Stomach (tissue), 19 donors: ENCODE measurements at regions of chr1 and their contacts with region 1.

Region 1: DNA sequence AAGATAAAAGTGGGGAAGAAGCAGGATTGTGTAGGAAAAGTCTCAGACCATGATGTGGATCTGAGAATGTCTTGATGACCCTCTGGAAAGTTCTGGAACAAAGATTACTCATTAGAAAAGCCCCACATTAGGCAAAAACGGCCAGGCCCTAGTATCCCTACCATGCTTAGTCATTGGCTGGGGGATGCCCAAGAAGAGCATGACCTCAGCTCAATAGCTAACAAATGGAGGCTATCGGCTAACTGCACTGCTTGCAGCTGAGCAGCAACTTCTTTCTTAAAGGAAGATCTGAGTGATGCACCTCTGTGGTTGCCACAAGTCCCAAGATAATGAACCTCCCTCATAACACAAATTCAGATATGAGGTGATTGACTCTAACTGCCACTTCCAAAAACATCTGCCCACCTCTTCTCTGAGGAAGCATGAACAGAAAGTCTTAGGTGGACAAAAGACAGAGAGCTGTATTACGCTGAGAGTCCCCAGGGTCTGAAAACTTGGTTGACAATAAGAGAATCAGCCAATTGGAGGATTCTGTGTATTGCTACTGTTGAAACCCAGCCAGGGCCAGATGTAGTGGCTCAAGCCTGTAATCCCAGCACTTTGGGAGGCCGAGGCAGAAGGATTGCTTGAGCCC is 64.6 kb upstream of the AK4 start:
- DNase-seq: no peak
- H3K4me3 ChIP-seq: no peak overlapping the region
- H3K27ac ChIP-seq: no peak overlapping the region
- H3K4me1 ChIP-seq: no peaks in the 10 kb centered on the region
- H3K27me3 ChIP-seq: no peaks in the 10 kb centered on the region
- CTCF ChIP-seq: no peak
- EP300 ChIP-seq: no peak
- POLR2A ChIP-seq: no peak

Region 2: GRCh38 chr1:65174585-65174984 is 91.2 kb after region 1 on chr1:
- intact Hi-C with region 1: no loop called
- DNase-seq: peak; percentile 57 to 83
- H3K4me3 ChIP-seq: no peak overlapping the region
- H3K27ac ChIP-seq: peak overlapping the region in 3 of 5 donors; percentile 43 to 61 (median 44)
- H3K4me1 ChIP-seq: peaks cover 28 to 87% (median 68%) of the 10 kb centered on the region in 4 donors
- H3K27me3 ChIP-seq: no peaks in the 10 kb centered on the region
- CTCF ChIP-seq: no peak
- EP300 ChIP-seq: no peak
- POLR2A ChIP-seq: no peak

Region 3: GRCh38 chr1:65213271-65214023 is 130.1 kb after region 1 on chr1:
- intact Hi-C with region 1: loop called (anchors 10 kb)
- DNase-seq: no peak
- H3K4me3 ChIP-seq: no peak overlapping the region
- H3K27ac ChIP-seq: no peak overlapping the region
- H3K4me1 ChIP-seq: peaks cover 6 to 26% (median 17%) of the 10 kb centered on the region in 4 donors
- H3K27me3 ChIP-seq: no peaks in the 10 kb centered on the region
- CTCF ChIP-seq: no peak
- EP300 ChIP-seq: no peak
- POLR2A ChIP-seq: no peak